Activated CD4-positive, alpha-beta memory T cell treated with anti-CD3 and anti-CD28 coated beads for 36 hours (primary cell): ENCODE measurements at regions of chr19 and their contacts with region 1.

Region 1: GRCh38 chr19:43463381-43464136 is 1.8 kb downstream of the LYPD3 start:
- DNase-seq: peak; percentile 100
- H3K4me3 Mint-ChIP-seq: peak overlapping the region; percentile 90
- H3K27ac Mint-ChIP-seq: peak overlapping the region; percentile 82
- H3K4me1 Mint-ChIP-seq: peaks cover 41% of the 10 kb centered on the region
- H3K27me3 Mint-ChIP-seq: no peaks in the 10 kb centered on the region

Region 2: GRCh38 chr19:43446746-43447489 is 16.6 kb before region 1 on chr19:
- CTCF ChIA-PET with region 1: interaction called, 86 read pairs
- POLR2A ChIA-PET with region 1: no interaction called
- intact Hi-C with region 1: loop called (anchors 2 kb)
- DNase-seq: peak; percentile 87
- H3K4me3 Mint-ChIP-seq: no peak overlapping the region
- H3K27ac Mint-ChIP-seq: no peak overlapping the region
- H3K4me1 Mint-ChIP-seq: peaks cover 16% of the 10 kb centered on the region
- H3K27me3 Mint-ChIP-seq: no peaks in the 10 kb centered on the region

Region 3: GRCh38 chr19:43474986-43475705 is 11.6 kb after region 1 on chr19:
- CTCF ChIA-PET with region 1: interaction called, 3 read pairs
- POLR2A ChIA-PET with region 1: interaction called, 4 read pairs
- intact Hi-C with region 1: loop called (anchors 1 kb)
- DNase-seq: peak; percentile 96
- H3K4me3 Mint-ChIP-seq: peak overlapping the region; percentile 70
- H3K27ac Mint-ChIP-seq: peak overlapping the region; percentile 85
- H3K4me1 Mint-ChIP-seq: peaks cover 15% of the 10 kb centered on the region
- H3K27me3 Mint-ChIP-seq: no peaks in the 10 kb centered on the region

Region 4: DNA sequence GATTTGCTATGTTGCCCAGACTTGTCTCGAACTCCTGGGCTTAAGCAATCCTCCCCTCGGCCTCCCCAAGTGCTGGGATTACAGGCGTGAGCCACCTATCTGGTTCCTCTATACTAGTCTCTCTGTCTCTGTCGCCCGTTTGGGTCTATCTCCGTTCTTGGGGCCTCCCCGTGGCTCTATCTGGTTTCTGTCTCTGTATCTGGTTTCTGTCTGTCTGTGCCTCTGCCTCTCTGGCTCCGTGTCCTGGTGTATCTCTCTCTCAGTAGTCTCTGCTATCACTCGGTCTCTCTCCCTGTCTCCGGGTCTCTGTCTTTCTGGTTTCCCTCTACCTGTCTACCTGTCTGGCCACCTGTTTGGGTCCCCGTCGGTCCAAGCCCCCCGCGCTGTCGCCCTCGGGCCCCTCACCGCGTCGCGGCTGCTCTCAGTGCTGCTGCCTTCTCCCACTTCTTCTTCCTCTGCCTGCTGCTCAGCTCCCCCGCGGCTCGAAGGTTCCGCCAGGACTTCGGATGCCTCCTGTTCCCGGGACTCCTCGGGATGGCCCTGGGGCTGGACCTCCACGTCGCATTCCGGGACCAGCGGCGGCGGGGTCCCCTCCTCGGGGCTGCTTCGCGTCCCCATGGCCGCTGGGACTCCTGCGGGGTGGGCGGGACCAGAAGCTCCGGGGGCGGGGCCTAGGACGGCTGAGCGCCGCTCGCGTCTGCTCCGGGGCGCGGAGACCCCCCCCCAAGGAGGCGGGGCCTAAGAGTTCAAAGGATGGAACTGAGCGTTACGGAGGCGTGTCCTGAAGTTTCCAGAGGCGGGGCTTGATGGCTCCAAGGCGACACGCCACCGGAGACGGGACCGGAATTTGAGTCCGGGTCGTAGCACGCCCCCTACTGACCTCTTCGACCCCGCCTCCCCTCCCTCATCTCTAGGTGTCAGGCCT is 40.2 kb after region 1 on chr19:
- CTCF ChIA-PET with region 1: interaction called, 5 read pairs
- POLR2A ChIA-PET with region 1: interaction called, 8 read pairs
- intact Hi-C with region 1: loop called (anchors 1 kb)
- DNase-seq: peak; percentile 99
- H3K4me3 Mint-ChIP-seq: peak overlapping the region; percentile 94
- H3K27ac Mint-ChIP-seq: peak overlapping the region; percentile 95
- H3K4me1 Mint-ChIP-seq: peaks cover 23% of the 10 kb centered on the region
- H3K27me3 Mint-ChIP-seq: no peaks in the 10 kb centered on the region

Region 5: GRCh38 chr19:43532962-43533545 is 69.5 kb after region 1 on chr19 and contains the start of gene ZNF575:
- CTCF ChIA-PET with region 1: interaction called, 3 read pairs
- POLR2A ChIA-PET with region 1: interaction called, 5 read pairs
- intact Hi-C with region 1: loop called (anchors 1 kb)
- DNase-seq: peak; percentile 95
- H3K4me3 Mint-ChIP-seq: peak within 1 kb of the TSS; percentile 82
- H3K27ac Mint-ChIP-seq: peak within 1 kb of the TSS; percentile 94
- H3K4me1 Mint-ChIP-seq: peaks cover 21% of the 10 kb centered on the region
- H3K27me3 Mint-ChIP-seq: no peaks in the 10 kb centered on the region
- total RNA-seq, gene ZNF575: 3.1 to 3.7 TPM

Region 6: GRCh38 chr19:43619262-43620060 is 155.9 kb after region 1 on chr19 and contains the start of gene ZNF428:
- CTCF ChIA-PET with region 1: no interaction called
- POLR2A ChIA-PET with region 1: no interaction called
- intact Hi-C with region 1: loop called (anchors 2 kb)
- DNase-seq: peak; percentile 92
- H3K4me3 Mint-ChIP-seq: peak within 1 kb of the TSS; percentile 97
- H3K27ac Mint-ChIP-seq: peak within 1 kb of the TSS; percentile 98
- H3K4me1 Mint-ChIP-seq: peaks cover 14% of the 10 kb centered on the region
- H3K27me3 Mint-ChIP-seq: no peaks in the 10 kb centered on the region
- total RNA-seq, gene ZNF428: 11.7 to 12.5 TPM

Region 7: DNA sequence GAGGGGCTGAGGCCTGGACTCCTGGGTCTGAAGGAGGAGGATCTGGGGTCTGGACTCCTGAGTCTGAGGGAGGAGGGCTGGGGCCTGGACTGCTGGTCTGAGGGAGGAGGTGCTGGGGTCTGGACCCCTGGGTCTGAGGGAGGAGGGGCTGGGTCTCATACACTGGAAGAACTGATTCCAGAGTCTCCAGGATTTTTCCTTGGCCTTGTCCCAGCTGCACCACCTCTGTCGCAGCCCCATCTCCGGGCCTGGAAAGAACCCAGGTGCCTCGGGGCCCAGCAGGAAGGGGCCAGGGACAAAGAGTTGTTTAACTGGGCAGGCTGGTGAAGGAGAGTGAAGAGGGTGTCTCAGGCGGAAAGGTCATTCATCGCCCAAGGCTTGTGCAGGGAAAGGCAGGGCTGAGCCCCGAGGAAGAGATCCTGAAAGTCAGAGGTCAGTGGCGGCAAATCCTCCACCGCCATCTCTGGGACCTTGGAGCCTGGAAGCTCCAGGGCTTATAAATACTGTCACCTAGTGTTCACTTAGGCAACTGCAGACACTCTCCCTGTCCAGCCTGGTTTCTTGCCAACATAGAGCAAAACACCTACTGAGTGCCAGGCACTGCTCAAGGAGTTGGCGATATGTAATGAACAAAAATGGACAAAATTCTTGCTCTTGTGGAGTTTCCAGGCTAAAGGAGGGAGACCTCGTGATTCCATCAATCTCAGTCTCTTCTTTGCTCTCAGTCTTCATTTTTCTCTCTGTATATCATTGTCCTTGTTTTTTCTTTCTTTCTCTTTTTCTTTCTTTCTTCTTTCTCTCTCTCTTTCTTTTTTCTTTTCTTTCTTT is 321.6 kb after region 1 on chr19:
- CTCF ChIA-PET with region 1: no interaction called
- POLR2A ChIA-PET with region 1: no interaction called
- intact Hi-C with region 1: loop called (anchors 10 kb)
- DNase-seq: peak; percentile 70
- H3K4me3 Mint-ChIP-seq: peak overlapping the region; percentile 75
- H3K27ac Mint-ChIP-seq: peak overlapping the region; percentile 96
- H3K4me1 Mint-ChIP-seq: peaks cover 39% of the 10 kb centered on the region
- H3K27me3 Mint-ChIP-seq: peaks cover 1% of the 10 kb centered on the region